HEK293 (cell line): ENCODE measurements at regions of chr1 and their contacts with region 1.

Region 1: GRCh38 chr1:226062558-226063223 is at the start of gene H3-3A:
- H3K4me3 ChIP-seq: peak within 1 kb of the TSS; percentile 95
- H3K27ac ChIP-seq: peak within 1 kb of the TSS; percentile 98
- H3K4me1 ChIP-seq: peaks cover 14% of the 10 kb centered on the region; the same call in 1 of the 2 replicates
- CTCF ChIP-seq: peak; percentile 92

Region 2: DNA sequence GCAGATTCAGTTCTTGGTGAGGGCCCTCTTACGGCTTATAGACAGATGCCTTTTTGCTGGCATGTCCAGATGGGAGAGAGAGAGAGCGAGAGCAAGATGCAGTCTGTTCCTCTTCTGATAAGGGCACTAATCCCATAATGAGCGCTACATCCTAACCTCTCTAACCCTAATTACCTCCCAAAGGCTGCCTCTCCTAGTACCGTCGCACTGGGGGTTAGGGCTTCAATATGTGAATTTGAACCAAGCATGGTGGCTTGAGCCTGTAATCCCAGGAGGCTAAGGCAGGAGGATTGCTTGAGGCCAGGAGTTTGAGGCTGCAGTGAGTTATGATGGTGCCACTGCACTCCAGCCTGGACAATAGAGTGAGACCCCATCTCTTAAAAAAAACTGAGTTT is 53.0 kb before region 1 on chr1:
- CTCF ChIA-PET with region 1: interaction called, 7 read pairs
- POLR2A ChIA-PET with region 1: interaction called, 11 read pairs
- H3K4me3 ChIP-seq: no peak overlapping the region
- H3K27ac ChIP-seq: no peak overlapping the region
- H3K4me1 ChIP-seq: no peaks in the 10 kb centered on the region
- CTCF ChIP-seq: no peak

Region 3: DNA sequence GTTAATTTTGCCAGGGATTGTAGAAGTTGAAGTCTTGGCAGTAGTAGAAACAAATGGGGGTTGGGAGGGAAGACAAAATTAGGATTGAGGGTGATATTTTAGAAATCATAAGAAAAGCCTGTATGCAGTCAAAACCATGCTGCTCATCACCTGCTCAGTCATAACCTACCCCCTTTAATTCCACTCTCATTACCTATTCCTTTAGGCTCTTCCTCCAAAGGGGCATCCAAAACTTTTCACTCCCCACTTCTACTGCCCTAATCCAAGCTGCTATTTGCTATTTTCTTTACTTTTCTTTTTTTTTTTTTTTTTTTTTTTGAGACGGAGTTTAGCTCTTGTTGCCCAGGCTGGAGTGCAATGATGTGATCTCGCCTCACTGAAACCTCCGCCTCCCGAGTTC is 11.4 kb after region 1 on chr1:
- CTCF ChIA-PET with region 1: interaction called, 34 read pairs
- POLR2A ChIA-PET with region 1: interaction called, 21 read pairs
- H3K4me3 ChIP-seq: no peak overlapping the region
- H3K27ac ChIP-seq: no peak overlapping the region
- H3K4me1 ChIP-seq: no peaks in the 10 kb centered on the region
- CTCF ChIP-seq: no peak

Region 4: GRCh38 chr1:226100436-226101391 is 38.0 kb after region 1 on chr1:
- CTCF ChIA-PET with region 1: interaction called, 24 read pairs
- POLR2A ChIA-PET with region 1: interaction called, 6 read pairs
- H3K4me3 ChIP-seq: no peak overlapping the region
- H3K27ac ChIP-seq: no peak overlapping the region
- H3K4me1 ChIP-seq: no peaks in the 10 kb centered on the region
- CTCF ChIP-seq: no peak; the same call in 1 of the 2 replicates

Region 5: DNA sequence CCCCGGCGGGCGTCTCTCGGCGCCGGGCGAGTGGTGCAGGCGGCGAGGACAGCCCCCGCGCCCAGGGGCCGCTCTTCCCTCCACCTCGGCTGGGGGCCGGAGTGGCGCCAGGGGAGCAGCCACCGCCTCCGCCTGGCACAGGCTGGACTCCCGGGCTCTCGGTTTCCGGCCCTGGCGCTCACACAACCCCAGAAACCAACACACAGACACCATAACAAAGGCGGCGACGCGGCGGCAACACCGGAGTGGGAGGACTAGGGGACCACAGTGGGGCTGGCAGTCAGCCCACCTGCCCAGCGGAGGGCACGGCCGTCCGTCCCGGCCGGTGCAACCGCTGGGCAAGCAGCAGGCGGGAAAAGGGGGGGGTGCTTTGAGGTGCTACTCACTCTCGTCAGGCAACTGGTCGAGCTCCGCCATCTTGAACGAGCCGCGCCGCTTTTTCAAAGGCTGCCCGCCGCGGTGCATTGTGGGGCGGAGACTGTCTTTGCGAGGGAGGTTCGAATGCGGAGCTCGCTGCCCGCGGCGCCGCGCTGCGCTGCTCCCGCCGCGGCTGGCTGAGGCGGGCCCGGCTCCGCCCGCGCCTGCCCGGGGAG is 246.1 kb after region 1 on chr1 and contains the start of gene LIN9:
- CTCF ChIA-PET with region 1: interaction called, 4 read pairs
- POLR2A ChIA-PET with region 1: interaction called, 18 read pairs
- H3K4me3 ChIP-seq: peak within 1 kb of the TSS; percentile 81
- H3K27ac ChIP-seq: peak within 1 kb of the TSS; percentile 96
- H3K4me1 ChIP-seq: peaks cover 8% of the 10 kb centered on the region; the same call in 1 of the 2 replicates
- CTCF ChIP-seq: peak; percentile 93